Naive thymus-derived CD4-positive, alpha-beta T cell (primary cell): ENCODE measurements at regions of chr10 and their contacts with region 1.

Region 1: GRCh38 chr10:80699602-80700039 is 161.9 kb downstream of the SH2D4B start:
- DNase-seq: peak; percentile 14 to 68 (median 54)
- ATAC-seq: peak; percentile 78
- H3K4me3 ChIP-seq: no peak overlapping the region
- H3K4me3 Mint-ChIP-seq: no peak overlapping the region
- H3K27ac ChIP-seq: no peak overlapping the region
- H3K27ac Mint-ChIP-seq: no peak overlapping the region
- H3K4me1 ChIP-seq: no peaks in the 10 kb centered on the region
- H3K4me1 Mint-ChIP-seq: no peaks in the 10 kb centered on the region
- H3K27me3 ChIP-seq: no peaks in the 10 kb centered on the region
- H3K27me3 Mint-ChIP-seq: peaks cover 0 to 14% (median 4%) of the 10 kb centered on the region in 5 donors

Region 2: GRCh38 chr10:80924063-80924952 is 224.7 kb after region 1 on chr10:
- CTCF ChIA-PET with region 1: no interaction called
- POLR2A ChIA-PET with region 1: no interaction called
- intact Hi-C with region 1: loop called in 1 of 2 experiments (anchors 1 kb)
- DNase-seq: peak in 3 of 9 donors; percentile 1 to 14 (median 10)
- ATAC-seq: no peak
- H3K4me3 ChIP-seq: no peak overlapping the region
- H3K4me3 Mint-ChIP-seq: no peak overlapping the region
- H3K27ac ChIP-seq: no peak overlapping the region
- H3K27ac Mint-ChIP-seq: no peak overlapping the region
- H3K4me1 ChIP-seq: no peaks in the 10 kb centered on the region
- H3K4me1 Mint-ChIP-seq: no peaks in the 10 kb centered on the region
- H3K27me3 ChIP-seq: no peaks in the 10 kb centered on the region
- H3K27me3 Mint-ChIP-seq: peaks cover 17 to 32% (median 24%) of the 10 kb centered on the region in 5 donors

Region 3: DNA sequence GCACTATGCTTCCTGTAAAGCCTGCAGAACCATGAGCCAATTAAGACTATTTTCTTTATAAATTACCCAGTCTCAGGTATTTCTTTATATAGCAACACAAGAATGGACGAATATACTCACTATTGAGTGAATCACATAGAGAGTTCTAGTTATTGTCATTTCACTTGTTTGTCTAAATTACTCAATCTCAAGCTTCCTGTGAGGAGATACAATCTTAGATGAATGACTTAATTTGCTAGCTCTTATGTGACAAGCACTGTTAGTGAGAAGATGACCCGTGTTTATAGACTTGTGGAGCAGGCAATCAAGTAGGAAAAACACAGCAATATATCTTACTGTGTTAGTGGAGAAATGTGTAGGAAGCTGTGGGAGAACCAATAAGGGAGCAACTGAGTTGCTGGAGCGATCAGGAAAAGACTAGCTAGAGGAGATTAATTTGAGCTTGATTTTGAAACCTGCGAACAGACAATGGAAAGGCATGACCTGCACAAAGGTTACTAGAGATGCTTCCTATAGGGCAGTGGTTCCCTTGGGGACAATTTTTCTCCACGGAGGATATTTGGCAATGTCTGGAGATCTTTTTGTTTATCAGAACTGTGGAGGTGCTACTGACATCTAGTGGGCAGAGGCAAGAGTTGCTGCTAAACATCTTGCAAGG is 319.2 kb after region 1 on chr10:
- CTCF ChIA-PET with region 1: no interaction called
- POLR2A ChIA-PET with region 1: no interaction called
- intact Hi-C with region 1: loop called (anchors 2 to 5 kb)
- DNase-seq: peak in 4 of 9 donors; percentile 1 to 19 (median 8)
- ATAC-seq: peak; percentile 52
- H3K4me3 ChIP-seq: no peak overlapping the region
- H3K4me3 Mint-ChIP-seq: no peak overlapping the region
- H3K27ac ChIP-seq: no peak overlapping the region
- H3K27ac Mint-ChIP-seq: no peak overlapping the region
- H3K4me1 ChIP-seq: no peaks in the 10 kb centered on the region
- H3K4me1 Mint-ChIP-seq: peaks cover 0 to 4% (median 0%) of the 10 kb centered on the region in 7 donors
- H3K27me3 ChIP-seq: no peaks in the 10 kb centered on the region
- H3K27me3 Mint-ChIP-seq: peaks cover 5 to 23% (median 12%) of the 10 kb centered on the region in 5 donors

Region 4: DNA sequence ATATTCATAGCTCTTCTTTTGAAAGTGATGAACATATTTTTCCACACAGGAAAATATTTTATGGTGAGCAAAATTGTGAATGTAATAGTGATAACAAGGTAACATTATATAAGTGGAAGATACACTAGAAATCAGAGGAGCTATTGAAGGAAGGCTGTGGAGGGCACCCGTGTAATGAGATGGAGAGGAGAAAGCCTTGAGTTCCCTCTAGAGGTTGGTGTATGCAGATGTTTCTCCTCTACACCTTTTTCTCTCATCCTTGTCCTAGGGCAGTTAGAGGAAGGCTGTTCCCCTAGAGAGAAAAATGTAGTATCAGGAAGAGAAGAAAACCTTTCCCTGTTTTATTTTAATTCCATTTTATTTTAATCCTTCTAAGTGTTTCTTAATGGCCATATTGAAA is 1120.8 kb after region 1 on chr10:
- CTCF ChIA-PET with region 1: interaction called, 3 read pairs
- POLR2A ChIA-PET with region 1: no interaction called
- intact Hi-C with region 1: loop called in 1 of 2 experiments (anchors 1 kb)
- DNase-seq: peak in 5 of 9 donors; percentile 2 to 35 (median 17)
- ATAC-seq: no peak
- H3K4me3 ChIP-seq: no peak overlapping the region
- H3K4me3 Mint-ChIP-seq: no peak overlapping the region
- H3K27ac ChIP-seq: no peak overlapping the region
- H3K27ac Mint-ChIP-seq: no peak overlapping the region
- H3K4me1 ChIP-seq: no peaks in the 10 kb centered on the region
- H3K4me1 Mint-ChIP-seq: no peaks in the 10 kb centered on the region
- H3K27me3 ChIP-seq: no peaks in the 10 kb centered on the region
- H3K27me3 Mint-ChIP-seq: no peaks in the 10 kb centered on the region